IMR-90 (cell line): ENCODE measurements at regions of chr10 and their contacts with region 1.

Region 1: DNA sequence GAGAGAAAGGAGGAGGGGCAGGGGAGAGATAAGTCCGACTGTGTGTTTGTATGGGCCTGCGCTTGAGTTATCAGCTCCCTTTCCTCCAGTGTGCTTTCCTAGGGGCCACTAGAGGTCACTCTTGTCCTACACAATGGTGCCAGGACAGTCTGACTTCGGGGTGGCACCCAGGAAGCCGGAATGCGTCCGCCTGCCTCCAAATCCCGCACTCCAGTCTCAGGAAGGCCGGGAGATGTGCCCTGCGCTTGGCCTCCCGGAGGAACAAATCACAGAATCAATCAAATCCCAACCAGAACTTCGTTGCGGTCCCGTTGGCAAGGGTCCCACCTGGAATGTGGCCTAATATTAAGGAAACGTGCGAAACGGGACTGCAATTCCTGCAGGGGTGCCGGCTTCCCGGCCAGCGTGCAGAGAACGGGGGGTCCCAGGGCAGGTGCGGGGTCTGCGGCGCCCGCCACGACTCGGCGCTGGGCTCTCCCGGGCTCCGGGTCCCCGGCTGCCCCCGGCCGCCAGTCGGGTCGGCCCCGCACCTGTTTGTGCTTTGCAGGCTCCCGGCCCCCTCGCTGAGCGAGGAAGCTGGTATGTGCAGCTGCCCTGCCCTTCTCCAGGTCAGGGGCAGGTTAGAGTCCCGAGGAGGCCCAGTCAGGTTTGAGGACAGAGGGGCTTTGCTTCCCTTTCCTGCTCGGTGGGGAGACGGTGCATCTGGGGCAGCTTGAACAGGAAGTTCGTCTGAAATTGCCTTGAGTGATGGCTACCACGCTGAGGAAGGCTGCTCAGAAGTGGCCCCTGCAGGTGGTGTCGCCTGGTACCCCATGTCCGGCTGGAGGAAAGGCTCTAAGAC is 21.0 kb upstream of the HPS1 start:
- DNase-seq: peak; percentile 83
- ATAC-seq: peak; percentile 99
- H3K4me3 ChIP-seq: peak overlapping the region; percentile 44
- H3K27ac ChIP-seq: no peak overlapping the region
- H3K4me1 ChIP-seq: no peaks in the 10 kb centered on the region
- H3K27me3 ChIP-seq: peaks cover 21% of the 10 kb centered on the region
- CTCF ChIP-seq: peak; percentile 94
- POLR2A ChIP-seq: no peak
- RAD21 ChIP-seq: peak; percentile 95

Region 2: GRCh38 chr10:98242823-98243222 is 224.9 kb before region 1 on chr10:
- CTCF ChIA-PET with region 1: no interaction called
- POLR2A ChIA-PET with region 1: no interaction called
- dilution Hi-C with region 1: no loop called
- in situ Hi-C with region 1: no loop called
- intact Hi-C with region 1: loop called (anchors 5 kb)
- DNase-seq: peak; percentile 56
- ATAC-seq: peak; percentile 44; the same call in 1 of the 2 replicates
- H3K4me3 ChIP-seq: no peak overlapping the region
- H3K27ac ChIP-seq: no peak overlapping the region
- H3K4me1 ChIP-seq: peaks cover 18% of the 10 kb centered on the region
- H3K27me3 ChIP-seq: no peaks in the 10 kb centered on the region
- CTCF ChIP-seq: peak; percentile 61
- POLR2A ChIP-seq: no peak
- RAD21 ChIP-seq: peak; percentile 71

Region 3: DNA sequence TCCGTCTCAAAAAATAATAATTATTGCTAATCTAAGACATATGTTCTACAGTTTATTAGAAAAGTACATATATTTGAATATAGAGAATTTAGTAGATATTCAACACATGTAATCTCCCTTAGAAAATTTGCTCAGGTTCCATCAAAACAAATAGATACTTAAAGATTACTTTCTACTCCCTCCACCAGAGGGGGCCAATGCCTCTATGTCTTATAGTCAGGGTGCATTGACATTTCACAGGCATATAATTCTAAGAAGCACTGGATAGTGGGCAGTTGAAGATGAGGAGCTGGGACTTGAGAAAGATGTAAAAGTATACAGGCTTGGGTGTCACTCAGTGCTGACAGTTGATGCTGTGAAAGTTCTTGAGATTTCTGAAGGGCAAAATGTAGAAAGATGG is 280.6 kb after region 1 on chr10:
- CTCF ChIA-PET with region 1: no interaction called
- POLR2A ChIA-PET with region 1: no interaction called
- dilution Hi-C with region 1: no loop called
- in situ Hi-C with region 1: no loop called
- intact Hi-C with region 1: loop called (anchors 1 kb)
- DNase-seq: peak; percentile 38
- ATAC-seq: no peak
- H3K4me3 ChIP-seq: no peak overlapping the region
- H3K27ac ChIP-seq: no peak overlapping the region
- H3K4me1 ChIP-seq: no peaks in the 10 kb centered on the region
- H3K27me3 ChIP-seq: no peaks in the 10 kb centered on the region
- CTCF ChIP-seq: peak; percentile 42
- POLR2A ChIP-seq: no peak
- RAD21 ChIP-seq: peak; percentile 20; the same call in 1 of the 2 replicates

Region 4: GRCh38 chr10:99042051-99042771 is 574.5 kb after region 1 on chr10:
- CTCF ChIA-PET with region 1: no interaction called
- POLR2A ChIA-PET with region 1: no interaction called
- dilution Hi-C with region 1: no loop called
- in situ Hi-C with region 1: no loop called
- intact Hi-C with region 1: loop called (anchors 1 kb)
- DNase-seq: no peak
- ATAC-seq: no peak
- H3K4me3 ChIP-seq: no peak overlapping the region
- H3K27ac ChIP-seq: no peak overlapping the region
- H3K4me1 ChIP-seq: no peaks in the 10 kb centered on the region
- H3K27me3 ChIP-seq: no peaks in the 10 kb centered on the region
- CTCF ChIP-seq: no peak
- POLR2A ChIP-seq: no peak
- RAD21 ChIP-seq: no peak

Region 5: GRCh38 chr10:99248824-99249223 is 781.1 kb after region 1 on chr10:
- CTCF ChIA-PET with region 1: interaction called, 9 read pairs
- POLR2A ChIA-PET with region 1: no interaction called
- dilution Hi-C with region 1: no loop called
- in situ Hi-C with region 1: loop called (anchors 10 kb)
- intact Hi-C with region 1: loop called (anchors 1 kb)
- DNase-seq: no peak
- ATAC-seq: no peak
- H3K4me3 ChIP-seq: no peak overlapping the region
- H3K27ac ChIP-seq: no peak overlapping the region
- H3K4me1 ChIP-seq: no peaks in the 10 kb centered on the region
- H3K27me3 ChIP-seq: no peaks in the 10 kb centered on the region
- CTCF ChIP-seq: no peak
- POLR2A ChIP-seq: no peak
- RAD21 ChIP-seq: no peak